Activated T-helper 2 cell treated with anti-CD3 and anti-CD28 coated beads, Interferon-gamma antibody, Interleukin-2, Interleukin-4, amounts not matched to agents 10 μg/mL and 5 μg/mL and 100 μg/mL, durations not matched to agents 14 hours and 24 hours and 36 hours (primary cell): ENCODE measurements at regions of chr6 and their contacts with region 1.

Region 1: GRCh38 chr6:13328076-13328874 is at the start of gene TBC1D7:
- DNase-seq: peak; percentile 93
- H3K4me3 Mint-ChIP-seq: peak within 1 kb of the TSS; percentile 89
- H3K27ac Mint-ChIP-seq: peak within 1 kb of the TSS; percentile 89
- H3K4me1 Mint-ChIP-seq: peaks cover 26% of the 10 kb centered on the region
- H3K27me3 Mint-ChIP-seq: no peaks in the 10 kb centered on the region
- total RNA-seq, gene TBC1D7: 22.9 and 23.3 TPM in 2 replicates

Region 2: DNA sequence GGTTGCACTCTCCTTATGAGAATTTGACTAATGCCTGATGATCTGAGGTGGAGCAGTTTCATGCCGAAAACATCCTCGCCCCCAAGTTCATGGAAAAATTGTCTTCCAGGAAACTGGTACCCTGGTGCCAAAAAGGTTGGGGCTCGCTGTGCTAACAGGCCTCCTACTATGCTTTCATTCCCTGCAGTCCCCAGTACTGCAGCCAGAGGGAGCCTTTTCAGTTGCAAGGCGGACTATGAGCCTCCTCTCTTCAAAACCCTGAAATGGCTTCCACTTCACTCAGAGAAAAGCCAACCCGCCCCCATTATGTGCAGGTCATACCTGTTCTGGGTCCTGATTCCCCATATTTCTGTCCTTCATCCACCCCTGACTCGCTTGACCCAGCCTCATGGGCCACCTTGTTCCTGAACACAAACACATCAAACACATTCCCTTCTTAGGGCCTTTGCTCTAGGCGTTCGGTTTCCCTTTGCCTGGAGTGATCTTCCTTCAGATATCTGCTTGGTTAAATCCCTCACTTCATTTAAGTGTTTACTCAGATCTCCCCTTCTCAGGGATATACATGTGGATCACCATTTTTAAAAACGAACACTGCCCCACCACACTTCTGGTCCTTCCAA is 438.0 kb before region 1 on chr6:
- intact Hi-C with region 1: loop called (anchors 5 kb)
- DNase-seq: no peak
- H3K4me3 Mint-ChIP-seq: no peak overlapping the region
- H3K27ac Mint-ChIP-seq: no peak overlapping the region
- H3K4me1 Mint-ChIP-seq: no peaks in the 10 kb centered on the region
- H3K27me3 Mint-ChIP-seq: no peaks in the 10 kb centered on the region

Region 3: GRCh38 chr6:12911387-12911960 is 416.8 kb before region 1 on chr6:
- intact Hi-C with region 1: loop called (anchors 5 kb)
- DNase-seq: no peak
- H3K4me3 Mint-ChIP-seq: no peak overlapping the region
- H3K27ac Mint-ChIP-seq: no peak overlapping the region
- H3K4me1 Mint-ChIP-seq: no peaks in the 10 kb centered on the region
- H3K27me3 Mint-ChIP-seq: peaks cover 15% of the 10 kb centered on the region

Region 4: DNA sequence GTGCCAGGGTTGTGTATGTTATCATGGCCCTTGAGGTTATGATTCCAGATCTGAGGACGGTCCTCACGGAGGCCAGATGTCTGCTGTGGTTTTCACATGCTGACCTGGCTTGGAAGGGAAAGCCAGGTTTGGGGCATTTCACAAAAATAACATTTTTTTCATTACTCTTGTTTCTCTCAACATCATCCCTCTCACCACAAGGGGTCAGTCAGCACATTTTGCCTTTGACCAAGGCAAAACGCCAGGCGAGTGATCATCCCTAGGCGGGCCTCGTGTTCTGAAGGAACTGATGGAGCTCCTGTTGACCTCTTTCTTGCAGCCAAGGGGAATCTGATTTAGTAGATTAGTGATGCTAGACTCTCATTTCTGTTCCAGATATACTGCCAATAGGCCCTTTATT is 133.4 kb before region 1 on chr6:
- intact Hi-C with region 1: loop called (anchors 2 kb)
- DNase-seq: no peak
- H3K4me3 Mint-ChIP-seq: no peak overlapping the region
- H3K27ac Mint-ChIP-seq: no peak overlapping the region
- H3K4me1 Mint-ChIP-seq: no peaks in the 10 kb centered on the region
- H3K27me3 Mint-ChIP-seq: peaks cover 13% of the 10 kb centered on the region

Region 5: GRCh38 chr6:13302751-13303667 is 25.3 kb before region 1 on chr6:
- intact Hi-C with region 1: loop called (anchors 2 kb)
- DNase-seq: peak; percentile 32
- H3K4me3 Mint-ChIP-seq: no peak overlapping the region
- H3K27ac Mint-ChIP-seq: peak overlapping the region; percentile 66
- H3K4me1 Mint-ChIP-seq: peaks cover 22% of the 10 kb centered on the region
- H3K27me3 Mint-ChIP-seq: no peaks in the 10 kb centered on the region